ENCODE measurements at regions of chr6 and their contacts with region 1.

Region 1: DNA sequence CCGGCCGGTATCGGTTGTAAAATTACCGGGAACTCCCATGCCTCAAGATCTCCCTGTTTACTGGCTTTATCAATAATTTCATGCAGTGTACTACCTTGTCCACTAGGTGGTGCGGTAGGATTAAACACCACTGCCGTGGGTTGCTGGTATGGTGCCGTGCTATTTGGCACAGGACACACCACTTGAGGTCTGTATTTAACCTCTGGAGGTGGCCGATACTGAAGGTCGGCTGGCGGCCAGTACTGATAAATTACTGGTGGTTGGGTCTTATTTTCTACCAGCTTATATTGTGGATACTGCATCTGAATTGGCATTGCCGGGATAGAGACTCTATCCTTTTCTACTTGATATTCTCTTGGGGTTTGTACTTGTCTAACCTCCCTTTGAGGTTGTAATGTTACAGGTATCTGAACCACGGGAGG is 14.3 kb upstream of the PTCRA start:
- DNase-seq: peak; percentile 34 to 82 (median 76)
- ATAC-seq: peak; percentile 100
- H3K4me3 ChIP-seq: no peak overlapping the region
- H3K4me3 Mint-ChIP-seq: peak overlapping the region in 1 of 10 donors; percentile 65
- H3K27ac ChIP-seq: no peak overlapping the region
- H3K27ac Mint-ChIP-seq: peak overlapping the region in 1 of 9 donors; percentile 18
- H3K4me1 ChIP-seq: no peaks in the 10 kb centered on the region
- H3K4me1 Mint-ChIP-seq: peaks cover 0 to 17% (median 5%) of the 10 kb centered on the region in 7 donors
- H3K27me3 ChIP-seq: no peaks in the 10 kb centered on the region
- H3K27me3 Mint-ChIP-seq: peaks cover 0 to 6% (median 0%) of the 10 kb centered on the region in 5 donors

Region 2: DNA sequence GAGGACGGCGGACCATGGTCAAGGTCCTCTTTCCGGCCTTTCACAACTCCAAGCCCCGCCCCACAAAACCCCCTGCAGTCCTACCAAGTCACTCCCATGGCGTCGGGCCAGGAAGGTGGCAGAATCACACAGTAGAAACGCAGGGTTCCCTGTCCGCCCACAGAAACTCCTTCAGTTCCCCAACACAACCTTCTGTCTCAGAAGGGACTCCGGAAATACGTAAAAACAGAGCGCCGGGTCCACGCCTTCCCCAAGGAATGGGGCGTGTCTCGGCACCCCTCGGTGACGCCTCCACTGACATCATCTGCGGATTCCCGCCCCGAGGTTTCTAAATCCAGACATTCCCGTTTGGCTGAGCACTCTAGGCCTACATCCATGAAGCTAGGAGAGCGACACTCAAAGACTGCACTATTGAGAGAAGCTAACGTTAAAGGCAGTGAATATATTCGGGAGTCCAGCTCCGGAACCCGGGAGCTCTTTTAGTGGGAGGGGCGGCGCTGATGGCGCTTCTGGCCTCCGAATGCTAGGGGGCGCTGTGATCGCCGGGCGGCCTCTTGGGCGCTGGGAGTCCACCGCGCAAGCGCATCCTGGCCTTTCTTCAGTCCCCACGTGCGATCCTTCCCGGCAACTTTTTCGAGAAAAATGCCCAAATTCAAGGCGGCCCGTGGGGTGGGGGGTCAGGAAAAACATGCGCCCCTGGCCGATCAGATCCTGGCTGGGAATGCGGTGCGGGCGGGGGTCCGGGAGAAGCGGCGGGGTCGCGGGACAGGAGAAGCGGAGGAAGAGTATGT is 980.4 kb before region 1 on chr6 and contains the starts of genes BYSL and MED20:
- CTCF ChIA-PET with region 1: no interaction called
- POLR2A ChIA-PET with region 1: no interaction called
- intact Hi-C with region 1: no loop called
- DNase-seq: peak; percentile 93 to 99 (median 96)
- ATAC-seq: peak; percentile 96
- H3K4me3 ChIP-seq: peak within 1 kb of the TSS; percentile 76
- H3K4me3 Mint-ChIP-seq: peak within 1 kb of the TSS; percentile 95 to 100 (median 99)
- H3K27ac ChIP-seq: peak within 1 kb of the TSS; percentile 95
- H3K27ac Mint-ChIP-seq: peak within 1 kb of the TSS; percentile 94 to 100 (median 99)
- H3K4me1 ChIP-seq: peaks cover 20 to 24% of the 10 kb centered on the region in 2 donors
- H3K4me1 Mint-ChIP-seq: peaks cover 27 to 58% (median 50%) of the 10 kb centered on the region in 7 donors
- H3K27me3 ChIP-seq: no peaks in the 10 kb centered on the region
- H3K27me3 Mint-ChIP-seq: peaks cover 0 to 3% (median 0%) of the 10 kb centered on the region in 5 donors
- total RNA-seq, gene BYSL: 3.9 to 35.7 (median 8.1) TPM
- total RNA-seq, gene MED20: 4.5 to 21.7 (median 9.4) TPM

Region 3: GRCh38 chr6:42075159-42075838 is 826.2 kb before region 1 on chr6:
- CTCF ChIA-PET with region 1: no interaction called
- POLR2A ChIA-PET with region 1: no interaction called
- intact Hi-C with region 1: loop called in 1 of 2 experiments (anchors 5 kb)
- DNase-seq: peak in 8 of 9 donors; percentile 30 to 69 (median 36)
- ATAC-seq: no peak
- H3K4me3 ChIP-seq: no peak overlapping the region
- H3K4me3 Mint-ChIP-seq: no peak overlapping the region
- H3K27ac ChIP-seq: no peak overlapping the region
- H3K27ac Mint-ChIP-seq: peak overlapping the region in 6 of 9 donors; percentile 17 to 69 (median 52)
- H3K4me1 ChIP-seq: no peaks in the 10 kb centered on the region
- H3K4me1 Mint-ChIP-seq: peaks cover 0 to 12% (median 4%) of the 10 kb centered on the region in 7 donors
- H3K27me3 ChIP-seq: no peaks in the 10 kb centered on the region
- H3K27me3 Mint-ChIP-seq: no peaks in the 10 kb centered on the region

Region 4: GRCh38 chr6:42726485-42727086 is 175.0 kb before region 1 on chr6:
- CTCF ChIA-PET with region 1: interaction called, 4 read pairs
- POLR2A ChIA-PET with region 1: no interaction called
- intact Hi-C with region 1: loop called (anchors 1 kb)
- DNase-seq: peak; percentile 20 to 87 (median 80)
- ATAC-seq: peak; percentile 99
- H3K4me3 ChIP-seq: peak overlapping the region; percentile 84
- H3K4me3 Mint-ChIP-seq: peak overlapping the region; percentile 76 to 96 (median 90)
- H3K27ac ChIP-seq: peak overlapping the region; percentile 74
- H3K27ac Mint-ChIP-seq: peak overlapping the region; percentile 89 to 99 (median 98)
- H3K4me1 ChIP-seq: peaks cover 6 to 14% of the 10 kb centered on the region in 2 donors
- H3K4me1 Mint-ChIP-seq: peaks cover 9 to 25% (median 20%) of the 10 kb centered on the region in 7 donors
- H3K27me3 ChIP-seq: no peaks in the 10 kb centered on the region
- H3K27me3 Mint-ChIP-seq: peaks cover 0 to 1% (median 0%) of the 10 kb centered on the region in 5 donors

Region 5: DNA sequence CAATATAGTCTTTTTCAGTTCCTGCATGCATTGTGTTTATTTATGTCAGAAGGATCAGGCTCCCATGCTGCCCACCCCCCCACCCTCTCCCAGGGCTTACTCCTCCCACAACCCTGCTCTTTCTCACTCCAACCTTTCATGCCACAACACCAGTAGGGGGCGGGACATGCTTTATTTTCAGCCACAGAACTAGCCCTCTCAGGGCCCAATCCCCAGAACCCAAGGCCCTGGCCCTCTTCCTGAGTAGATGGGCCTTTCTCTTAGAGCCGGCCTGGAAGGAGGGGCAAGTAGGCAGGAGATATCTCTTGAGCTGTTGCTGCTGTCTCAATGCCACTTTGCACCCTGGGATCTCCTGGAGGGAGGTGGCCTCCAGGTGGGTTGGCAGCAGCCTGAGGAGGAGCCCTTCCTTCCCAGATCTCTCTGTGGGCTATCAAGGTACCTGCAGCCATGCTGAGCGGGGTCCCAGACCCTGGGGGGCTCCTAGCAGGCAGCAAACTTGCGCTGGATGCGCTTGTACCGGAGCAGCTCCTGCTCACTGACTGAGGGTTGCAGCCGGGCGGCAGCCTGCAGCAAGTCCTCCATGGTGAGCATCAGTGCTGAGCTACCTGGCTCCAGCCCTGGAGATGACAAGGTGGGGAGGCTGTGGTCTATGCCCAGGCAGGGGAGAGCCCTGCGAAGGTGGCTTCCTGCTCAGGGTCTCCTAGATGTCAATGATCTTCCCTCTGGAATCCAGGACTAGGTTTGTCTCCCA is 62.5 kb after region 1 on chr6:
- CTCF ChIA-PET with region 1: interaction called, 3 read pairs
- POLR2A ChIA-PET with region 1: no interaction called
- intact Hi-C with region 1: loop called in 1 of 2 experiments (anchors 5 kb)
- DNase-seq: peak in 5 of 9 donors; percentile 14 to 46 (median 23)
- ATAC-seq: peak; percentile 43
- H3K4me3 ChIP-seq: no peak overlapping the region
- H3K4me3 Mint-ChIP-seq: no peak overlapping the region
- H3K27ac ChIP-seq: no peak overlapping the region
- H3K27ac Mint-ChIP-seq: no peak overlapping the region
- H3K4me1 ChIP-seq: peaks cover 0 to 5% of the 10 kb centered on the region in 2 donors
- H3K4me1 Mint-ChIP-seq: peaks cover 0 to 24% (median 16%) of the 10 kb centered on the region in 7 donors
- H3K27me3 ChIP-seq: no peaks in the 10 kb centered on the region
- H3K27me3 Mint-ChIP-seq: peaks cover 0 to 18% (median 0%) of the 10 kb centered on the region in 5 donors

Region 6: DNA sequence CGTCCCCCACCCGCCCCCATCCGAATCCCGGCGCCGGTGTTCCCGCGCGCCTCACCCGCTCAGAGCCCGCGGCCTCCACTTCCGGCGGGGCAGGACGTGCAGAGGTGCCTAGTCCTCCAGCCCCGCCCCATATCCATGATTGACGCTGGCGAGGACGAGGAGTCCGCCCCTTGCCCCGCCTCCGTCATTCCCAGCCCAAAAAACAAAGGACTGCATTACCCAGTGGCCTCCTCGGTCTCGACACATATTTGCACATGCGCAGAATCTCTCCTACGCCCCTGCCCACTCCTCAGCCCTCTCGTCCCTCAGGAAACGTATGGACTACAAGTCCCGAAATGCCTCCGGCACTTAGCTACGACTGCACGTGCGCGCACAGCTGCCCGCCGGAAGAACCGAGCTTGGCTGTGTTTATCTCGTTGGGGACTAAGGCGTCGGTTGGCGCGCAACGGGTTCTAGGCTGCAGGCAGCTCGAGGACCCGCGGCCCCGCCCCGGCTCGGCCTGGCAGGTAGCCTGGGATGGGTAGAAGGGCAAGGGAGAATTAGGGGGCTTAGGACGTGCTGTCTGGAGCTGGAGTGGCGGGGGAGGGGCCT is 112.4 kb after region 1 on chr6 and contains the starts of genes KLHDC3 and MEA1:
- CTCF ChIA-PET with region 1: interaction called, 3 read pairs
- POLR2A ChIA-PET with region 1: interaction called, 3 read pairs
- intact Hi-C with region 1: loop called in 1 of 2 experiments (anchors 1 kb)
- DNase-seq: peak; percentile 83 to 100 (median 99)
- ATAC-seq: peak; percentile 98
- H3K4me3 ChIP-seq: peak within 1 kb of the TSS; percentile 73
- H3K4me3 Mint-ChIP-seq: peak within 1 kb of the TSS; percentile 85 to 99 (median 92)
- H3K27ac ChIP-seq: peak within 1 kb of the TSS; percentile 84
- H3K27ac Mint-ChIP-seq: peak within 1 kb of the TSS; percentile 82 to 97 (median 92)
- H3K4me1 ChIP-seq: peaks cover 20 to 31% of the 10 kb centered on the region in 2 donors
- H3K4me1 Mint-ChIP-seq: peaks cover 45 to 78% (median 58%) of the 10 kb centered on the region in 7 donors
- H3K27me3 ChIP-seq: no peaks in the 10 kb centered on the region
- H3K27me3 Mint-ChIP-seq: peaks cover 0 to 3% (median 0%) of the 10 kb centered on the region in 5 donors
- total RNA-seq, gene KLHDC3: 39.9 to 76.9 (median 67.4) TPM
- total RNA-seq, gene MEA1: 20.3 to 58.0 (median 32.7) TPM

Region 7: GRCh38 chr6:43143235-43144124 is 241.9 kb after region 1 on chr6:
- CTCF ChIA-PET with region 1: interaction called, 29 read pairs
- POLR2A ChIA-PET with region 1: interaction called, 3 read pairs
- intact Hi-C with region 1: loop called (anchors 1 kb)
- DNase-seq: peak; percentile 62 to 85 (median 76)
- ATAC-seq: peak; percentile 95
- H3K4me3 ChIP-seq: peak overlapping the region; percentile 0
- H3K4me3 Mint-ChIP-seq: peak overlapping the region in 8 of 10 donors; percentile 25 to 63 (median 38)
- H3K27ac ChIP-seq: no peak overlapping the region
- H3K27ac Mint-ChIP-seq: peak overlapping the region in 5 of 9 donors; percentile 30 to 86 (median 51)
- H3K4me1 ChIP-seq: peaks cover 11 to 21% of the 10 kb centered on the region in 2 donors
- H3K4me1 Mint-ChIP-seq: peaks cover 5 to 21% (median 16%) of the 10 kb centered on the region in 7 donors
- H3K27me3 ChIP-seq: no peaks in the 10 kb centered on the region
- H3K27me3 Mint-ChIP-seq: no peaks in the 10 kb centered on the region

Region 8: GRCh38 chr6:44332585-44332984 is 1431.0 kb after region 1 on chr6:
- CTCF ChIA-PET with region 1: no interaction called
- POLR2A ChIA-PET with region 1: no interaction called
- intact Hi-C with region 1: no loop called
- DNase-seq: no peak
- ATAC-seq: no peak
- H3K4me3 ChIP-seq: no peak overlapping the region
- H3K4me3 Mint-ChIP-seq: no peak overlapping the region
- H3K27ac ChIP-seq: no peak overlapping the region
- H3K27ac Mint-ChIP-seq: no peak overlapping the region
- H3K4me1 ChIP-seq: no peaks in the 10 kb centered on the region
- H3K4me1 Mint-ChIP-seq: no peaks in the 10 kb centered on the region
- H3K27me3 ChIP-seq: no peaks in the 10 kb centered on the region
- H3K27me3 Mint-ChIP-seq: peaks cover 26 to 39% (median 34%) of the 10 kb centered on the region in 5 donors

Measured in naive thymus-derived CD4-positive, alpha-beta T cell (primary cell).